HEK293 (cell line): ENCODE measurements at regions of chr18 and their contacts with region 1.

Region 1: DNA sequence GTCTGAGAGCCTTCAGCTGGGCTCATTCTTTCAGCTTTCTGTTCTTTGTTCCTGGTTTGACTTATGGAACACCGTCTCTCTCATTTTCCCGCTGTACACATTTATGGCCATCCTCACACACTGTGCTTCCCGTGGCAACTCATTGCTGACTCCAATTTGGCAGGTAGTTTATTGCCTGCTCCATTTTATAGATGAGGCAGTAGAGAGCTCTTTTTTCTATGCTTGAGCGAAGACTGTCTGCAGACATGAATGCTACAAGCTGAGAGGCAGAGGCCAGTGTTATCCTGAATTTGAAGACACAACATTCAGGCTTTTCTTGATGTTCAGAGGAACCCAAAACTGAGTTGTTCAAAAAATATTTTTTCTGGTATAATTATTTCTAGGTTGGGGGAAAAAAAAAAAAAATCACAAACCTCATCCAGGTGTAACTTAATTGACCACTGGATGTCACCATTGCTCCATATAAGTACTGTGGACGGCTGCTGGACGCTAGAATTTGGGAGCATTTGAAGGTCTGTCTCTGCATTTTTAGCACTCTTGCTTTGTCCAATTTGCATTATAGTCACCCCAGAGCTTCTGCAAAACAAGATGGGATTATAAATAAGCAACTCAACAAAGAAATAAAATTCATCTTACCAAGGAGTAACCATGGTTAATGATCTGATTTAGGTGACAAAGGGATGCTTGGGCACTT is 83.5 kb downstream of the HRH4 start:
- H3K4me3 ChIP-seq: no peak overlapping the region
- H3K27ac ChIP-seq: no peak overlapping the region
- H3K4me1 ChIP-seq: peaks cover 2% of the 10 kb centered on the region
- CTCF ChIP-seq: peak; percentile 50; the same call in 1 of the 2 replicates

Region 2: GRCh38 chr18:24502644-24503523 is 41.1 kb before region 1 on chr18:
- CTCF ChIA-PET with region 1: interaction called, 11 read pairs
- POLR2A ChIA-PET with region 1: no interaction called
- H3K4me3 ChIP-seq: no peak overlapping the region
- H3K27ac ChIP-seq: no peak overlapping the region
- H3K4me1 ChIP-seq: no peaks in the 10 kb centered on the region
- CTCF ChIP-seq: no peak

Region 3: GRCh38 chr18:24530630-24531111 is 13.3 kb before region 1 on chr18:
- CTCF ChIA-PET with region 1: interaction called, 17 read pairs
- POLR2A ChIA-PET with region 1: no interaction called
- H3K4me3 ChIP-seq: no peak overlapping the region
- H3K27ac ChIP-seq: no peak overlapping the region
- H3K4me1 ChIP-seq: peaks cover 6% of the 10 kb centered on the region
- CTCF ChIP-seq: no peak

Region 4: DNA sequence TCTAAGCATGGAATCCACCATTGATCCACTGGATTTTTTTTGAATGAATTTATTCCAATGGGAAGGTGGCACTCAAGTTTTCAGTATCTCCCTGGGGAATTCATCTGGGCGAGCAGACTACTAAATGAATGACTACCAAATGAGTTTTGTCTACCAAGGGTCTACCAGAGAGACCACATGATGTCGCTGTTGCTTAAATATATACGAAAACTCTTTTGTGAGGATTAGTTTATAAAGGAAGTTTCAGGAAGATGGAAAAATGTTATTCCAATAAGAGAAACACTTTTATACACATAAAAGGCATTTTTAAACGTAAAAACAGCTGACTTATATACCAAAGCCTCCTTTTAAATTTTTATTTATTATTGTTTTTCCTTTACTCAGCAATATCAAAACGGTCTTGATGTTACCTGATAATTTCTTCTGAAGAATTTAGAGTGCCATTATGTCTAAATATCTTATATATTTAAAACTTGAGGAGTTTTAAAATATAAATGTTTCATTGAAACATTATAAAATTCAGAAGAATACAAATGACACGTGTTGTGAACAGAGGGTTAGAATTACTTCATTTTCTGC is 56.2 kb after region 1 on chr18:
- CTCF ChIA-PET with region 1: interaction called, 11 read pairs
- POLR2A ChIA-PET with region 1: no interaction called
- H3K4me3 ChIP-seq: no peak overlapping the region
- H3K27ac ChIP-seq: no peak overlapping the region
- H3K4me1 ChIP-seq: no peaks in the 10 kb centered on the region
- CTCF ChIP-seq: peak; percentile 21; the same call in 1 of the 2 replicates

Region 5: DNA sequence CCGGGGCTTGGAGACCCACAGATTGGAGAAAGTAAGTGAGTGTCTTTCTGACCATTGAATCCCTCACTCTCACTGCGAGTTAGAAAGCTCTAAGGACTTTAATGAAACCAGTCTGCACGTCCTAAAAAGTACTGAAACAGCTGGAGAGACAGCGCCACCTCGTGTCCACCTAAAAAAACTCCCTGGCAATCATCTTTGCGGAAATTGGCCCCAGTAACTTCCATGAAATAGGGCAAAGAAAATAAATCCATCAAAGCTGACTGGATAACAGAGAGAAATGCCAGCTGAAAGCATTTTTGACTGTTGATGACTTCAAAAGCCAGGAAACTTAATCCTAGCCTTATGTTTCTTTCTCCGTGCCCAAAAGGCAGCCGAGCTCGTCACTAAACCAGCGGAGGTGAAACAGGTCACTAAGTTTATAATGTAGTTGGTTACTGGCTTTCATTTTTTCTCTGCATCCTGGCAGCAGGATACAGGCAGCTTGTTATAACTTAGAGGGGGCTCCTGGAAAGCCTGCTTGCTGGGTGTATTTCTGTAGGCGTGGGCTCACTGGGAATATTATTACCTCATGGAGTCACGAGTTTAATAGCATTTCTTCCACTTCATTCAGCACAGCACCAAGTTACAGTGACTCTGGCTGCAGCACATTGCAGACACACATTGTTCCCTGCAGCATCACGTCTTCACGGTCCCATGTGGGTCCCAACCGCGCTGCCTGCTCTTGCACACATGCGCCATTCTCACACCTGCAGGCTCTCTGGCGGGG is 183.0 kb after region 1 on chr18:
- CTCF ChIA-PET with region 1: interaction called, 117 read pairs
- POLR2A ChIA-PET with region 1: no interaction called
- H3K4me3 ChIP-seq: no peak overlapping the region
- H3K27ac ChIP-seq: no peak overlapping the region
- H3K4me1 ChIP-seq: no peaks in the 10 kb centered on the region
- CTCF ChIP-seq: peak; percentile 52; the same call in 1 of the 2 replicates

Region 6: GRCh38 chr18:24734058-24734457 is 190.1 kb after region 1 on chr18:
- CTCF ChIA-PET with region 1: interaction called, 54 read pairs
- POLR2A ChIA-PET with region 1: no interaction called
- H3K4me3 ChIP-seq: no peak overlapping the region
- H3K27ac ChIP-seq: no peak overlapping the region
- H3K4me1 ChIP-seq: no peaks in the 10 kb centered on the region
- CTCF ChIP-seq: peak; percentile 68

Region 7: DNA sequence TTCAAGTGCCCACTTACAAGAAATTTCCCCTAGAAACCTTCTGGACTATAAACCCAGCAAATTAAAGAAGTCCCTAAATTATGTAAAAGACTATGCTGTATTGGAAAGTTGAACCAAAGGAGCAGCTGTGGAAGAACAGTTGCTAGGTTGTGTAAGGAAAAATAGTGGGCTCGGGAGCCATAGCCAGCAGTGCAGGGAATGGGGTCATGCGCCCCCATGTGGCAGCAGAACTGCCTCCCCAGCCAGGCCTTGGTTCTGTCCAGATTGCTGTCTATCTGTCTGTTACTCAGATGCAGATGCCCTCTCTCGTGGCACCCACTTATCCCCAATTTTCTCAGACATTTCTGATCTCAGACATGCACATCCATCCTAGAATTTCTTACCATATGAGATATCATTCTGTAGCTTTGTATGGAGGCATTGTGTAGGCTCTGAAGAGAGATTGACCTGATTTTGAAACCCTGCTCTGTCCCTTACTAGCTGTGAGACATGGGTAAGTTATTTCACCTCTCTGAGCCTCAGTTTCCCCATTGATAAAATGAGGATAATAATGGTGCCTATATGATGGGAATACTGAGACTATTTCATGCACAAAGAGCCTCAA is 1288.2 kb after region 1 on chr18:
- CTCF ChIA-PET with region 1: interaction called, 14 read pairs
- POLR2A ChIA-PET with region 1: no interaction called
- H3K4me3 ChIP-seq: no peak overlapping the region
- H3K27ac ChIP-seq: no peak overlapping the region
- H3K4me1 ChIP-seq: peaks cover 3% of the 10 kb centered on the region; the same call in 1 of the 2 replicates
- CTCF ChIP-seq: peak; percentile 48; the same call in 1 of the 2 replicates